ENCODE measurements at regions of chr17 and their contacts with region 1.

Region 1: GRCh38 chr17:50094753-50095619 is at the start of gene PDK2:
- DNase-seq: peak; percentile 90 to 95
- H3K4me3 ChIP-seq: peak within 1 kb of the TSS; percentile 62
- H3K4me1 ChIP-seq: peaks cover 15% of the 10 kb centered on the region
- H3K27me3 ChIP-seq: no peaks in the 10 kb centered on the region

Region 2: GRCh38 chr17:50289991-50290702 is 195.2 kb after region 1 on chr17:
- in situ Hi-C with region 1: loop called (anchors 5 kb)
- DNase-seq: no peak
- H3K4me3 ChIP-seq: no peak overlapping the region
- H3K4me1 ChIP-seq: no peaks in the 10 kb centered on the region
- H3K27me3 ChIP-seq: no peaks in the 10 kb centered on the region; the same call in 1 of the 2 replicates

Measured in HAP-1 (cell line).